ENCODE measurements at regions of chrX and their contacts with region 1.

Region 1: GRCh38 chrX:136694431-136695087 is 46.6 kb downstream of the CD40LG start:
- DNase-seq: peak; percentile 64 to 74 (median 65)
- H3K4me3 ChIP-seq: peak overlapping the region in 1 of 2 donors; percentile 27
- H3K4me3 Mint-ChIP-seq: peak overlapping the region; percentile 74 to 93 (median 84)
- H3K27ac ChIP-seq: peak overlapping the region; percentile 83
- H3K27ac Mint-ChIP-seq: peak overlapping the region; percentile 94 to 100 (median 98)
- H3K4me1 ChIP-seq: peaks cover 81% of the 10 kb centered on the region
- H3K4me1 Mint-ChIP-seq: peaks cover 37 to 80% (median 59%) of the 10 kb centered on the region in 4 donors
- H3K27me3 ChIP-seq: no peaks in the 10 kb centered on the region
- H3K27me3 Mint-ChIP-seq: no peaks in the 10 kb centered on the region

Region 2: GRCh38 chrX:136572030-136572429 is 122.5 kb before region 1 on chrX:
- CTCF ChIA-PET with region 1: interaction called, 19 read pairs
- POLR2A ChIA-PET with region 1: interaction called, 7 read pairs
- intact Hi-C with region 1: loop called (anchors 1 kb)
- DNase-seq: peak in 2 of 5 donors; percentile 11 to 31
- H3K4me3 ChIP-seq: no peak overlapping the region
- H3K4me3 Mint-ChIP-seq: peak overlapping the region in 6 of 8 donors; percentile 26 to 81 (median 58)
- H3K27ac ChIP-seq: no peak overlapping the region
- H3K27ac Mint-ChIP-seq: peak overlapping the region in 4 of 7 donors; percentile 66 to 77 (median 68)
- H3K4me1 ChIP-seq: peaks cover 20% of the 10 kb centered on the region
- H3K4me1 Mint-ChIP-seq: peaks cover 4 to 19% (median 13%) of the 10 kb centered on the region in 4 donors
- H3K27me3 ChIP-seq: no peaks in the 10 kb centered on the region
- H3K27me3 Mint-ChIP-seq: no peaks in the 10 kb centered on the region

Region 3: DNA sequence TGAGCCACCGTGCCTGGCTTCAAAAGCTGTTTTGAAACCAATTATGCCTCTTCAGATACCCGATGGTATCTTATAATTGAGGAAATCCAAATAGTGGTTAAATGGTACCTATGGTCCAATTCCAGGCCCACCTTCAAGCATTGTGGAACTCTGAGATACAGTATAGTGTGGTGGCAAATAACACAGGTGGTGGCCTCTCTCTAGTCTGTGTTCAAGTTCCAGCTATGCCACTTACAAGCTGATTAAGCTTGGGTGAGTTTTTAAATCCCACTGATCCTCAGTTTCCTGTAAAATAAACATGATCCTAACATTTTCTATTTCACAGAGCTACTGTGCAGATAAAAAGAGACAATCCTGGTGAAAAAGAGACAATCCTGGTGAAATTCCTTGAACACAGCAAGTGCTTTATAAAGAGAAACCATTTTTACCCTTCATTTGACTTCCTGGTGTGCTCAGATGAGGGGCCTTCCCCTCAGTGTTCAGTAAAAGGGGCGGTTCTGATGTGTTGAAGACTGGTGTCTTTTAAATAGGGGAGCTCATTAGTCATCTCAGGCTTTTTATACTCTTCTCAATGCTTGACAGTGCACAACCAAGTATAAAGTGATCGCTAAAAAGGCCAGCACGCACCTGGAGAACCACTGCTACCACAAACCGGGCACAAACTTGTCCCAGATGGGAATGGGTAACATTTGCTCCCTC is 77.4 kb before region 1 on chrX:
- CTCF ChIA-PET with region 1: interaction called, 126 read pairs
- POLR2A ChIA-PET with region 1: interaction called, 12 read pairs
- intact Hi-C with region 1: no loop called
- DNase-seq: peak in 4 of 5 donors; percentile 42 to 69 (median 48)
- H3K4me3 ChIP-seq: peak overlapping the region in 1 of 2 donors; percentile 18
- H3K4me3 Mint-ChIP-seq: peak overlapping the region; percentile 27 to 81 (median 68)
- H3K27ac ChIP-seq: peak overlapping the region; percentile 57
- H3K27ac Mint-ChIP-seq: peak overlapping the region; percentile 79 to 93 (median 87)
- H3K4me1 ChIP-seq: peaks cover 67% of the 10 kb centered on the region
- H3K4me1 Mint-ChIP-seq: peaks cover 36 to 70% (median 46%) of the 10 kb centered on the region in 4 donors
- H3K27me3 ChIP-seq: no peaks in the 10 kb centered on the region
- H3K27me3 Mint-ChIP-seq: no peaks in the 10 kb centered on the region

Region 4: DNA sequence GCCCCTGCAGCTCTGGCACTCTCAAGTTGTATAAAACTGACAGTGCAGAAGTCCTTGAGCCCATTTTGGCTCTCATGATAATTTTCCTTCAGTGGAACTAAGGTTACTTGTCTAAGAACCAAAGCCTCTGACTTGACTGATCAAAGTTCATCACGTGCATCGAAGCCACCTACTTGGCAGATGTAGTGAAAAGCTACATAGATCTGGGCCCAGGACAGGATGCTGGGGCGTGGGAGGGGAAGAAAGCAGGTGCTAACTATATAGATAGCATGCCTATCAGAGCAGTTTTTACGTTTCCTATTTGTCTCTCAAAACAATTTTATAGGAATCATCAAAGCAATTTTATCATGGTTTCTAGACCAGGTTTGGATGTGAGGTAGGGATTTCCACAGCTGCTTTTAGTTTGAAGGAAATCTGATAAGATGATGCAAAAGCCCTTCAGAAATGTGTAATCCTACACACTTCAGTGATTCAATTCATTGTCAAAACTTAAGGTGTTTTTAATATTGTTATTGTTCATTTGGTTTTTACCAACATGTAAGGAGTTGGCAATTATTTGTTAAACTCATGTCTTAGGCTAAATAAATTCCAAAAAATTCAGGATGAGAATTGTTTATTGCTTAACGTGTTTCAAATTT is 47.8 kb before region 1 on chrX:
- CTCF ChIA-PET with region 1: interaction called, 25 read pairs
- POLR2A ChIA-PET with region 1: interaction called, 77 read pairs
- intact Hi-C with region 1: loop called (anchors 2 kb)
- DNase-seq: peak; percentile 60 to 79 (median 64)
- H3K4me3 ChIP-seq: peak overlapping the region in 1 of 2 donors; percentile 3
- H3K4me3 Mint-ChIP-seq: peak overlapping the region; percentile 89 to 99 (median 97)
- H3K27ac ChIP-seq: peak overlapping the region; percentile 82
- H3K27ac Mint-ChIP-seq: peak overlapping the region; percentile 66 to 97 (median 91)
- H3K4me1 ChIP-seq: peaks cover 52% of the 10 kb centered on the region
- H3K4me1 Mint-ChIP-seq: peaks cover 34 to 60% (median 43%) of the 10 kb centered on the region in 4 donors
- H3K27me3 ChIP-seq: no peaks in the 10 kb centered on the region
- H3K27me3 Mint-ChIP-seq: no peaks in the 10 kb centered on the region

Region 5: GRCh38 chrX:136674270-136674985 is 20.1 kb before region 1 on chrX:
- CTCF ChIA-PET with region 1: interaction called, 7 read pairs
- POLR2A ChIA-PET with region 1: interaction called, 37 read pairs
- intact Hi-C with region 1: loop called (anchors 1 kb)
- DNase-seq: peak; percentile 64 to 79 (median 75)
- H3K4me3 ChIP-seq: peak overlapping the region in 1 of 2 donors; percentile 12
- H3K4me3 Mint-ChIP-seq: peak overlapping the region; percentile 37 to 91 (median 78)
- H3K27ac ChIP-seq: peak overlapping the region; percentile 58
- H3K27ac Mint-ChIP-seq: peak overlapping the region; percentile 89 to 99 (median 94)
- H3K4me1 ChIP-seq: peaks cover 98% of the 10 kb centered on the region
- H3K4me1 Mint-ChIP-seq: peaks cover 68 to 100% (median 79%) of the 10 kb centered on the region in 4 donors
- H3K27me3 ChIP-seq: no peaks in the 10 kb centered on the region
- H3K27me3 Mint-ChIP-seq: no peaks in the 10 kb centered on the region

Region 6: GRCh38 chrX:136880452-136881013 is 186.0 kb after region 1 on chrX and contains the start of gene RBMX:
- CTCF ChIA-PET with region 1: interaction called, 3 read pairs
- POLR2A ChIA-PET with region 1: interaction called, 11 read pairs
- intact Hi-C with region 1: no loop called
- DNase-seq: peak; percentile 88 to 91 (median 90)
- H3K4me3 ChIP-seq: peak within 1 kb of the TSS; percentile 86 to 90
- H3K4me3 Mint-ChIP-seq: peak within 1 kb of the TSS; percentile 93 to 99 (median 98)
- H3K27ac ChIP-seq: peak within 1 kb of the TSS; percentile 99
- H3K27ac Mint-ChIP-seq: peak within 1 kb of the TSS; percentile 97 to 100 (median 99)
- H3K4me1 ChIP-seq: peaks cover 17% of the 10 kb centered on the region
- H3K4me1 Mint-ChIP-seq: peaks cover 1 to 30% (median 16%) of the 10 kb centered on the region in 4 donors
- H3K27me3 ChIP-seq: no peaks in the 10 kb centered on the region
- H3K27me3 Mint-ChIP-seq: no peaks in the 10 kb centered on the region
- total RNA-seq, gene RBMX: 239 to 246 TPM